ENCODE measurements at regions of chr1 and their contacts with region 1.

Region 1: GRCh38 chr1:112715264-112716053 is at the start of gene PPM1J:
- DNase-seq: peak; percentile 92 to 99 (median 96)
- H3K4me3 ChIP-seq: peak within 1 kb of the TSS; percentile 87
- H3K4me3 Mint-ChIP-seq: peak within 1 kb of the TSS; percentile 85 to 96 (median 92)
- H3K27ac ChIP-seq: peak within 1 kb of the TSS; percentile 54
- H3K27ac Mint-ChIP-seq: peak within 1 kb of the TSS; percentile 83 to 97 (median 92)
- H3K4me1 ChIP-seq: peaks cover 20% of the 10 kb centered on the region
- H3K4me1 Mint-ChIP-seq: peaks cover 18 to 27% (median 21%) of the 10 kb centered on the region in 3 donors
- H3K27me3 ChIP-seq: peaks cover 13% of the 10 kb centered on the region
- H3K27me3 Mint-ChIP-seq: peaks cover 6 to 14% of the 10 kb centered on the region in 2 donors
- total RNA-seq, gene PPM1J: 0.33 TPM in 1 of 2 experiments, not detected in the other

Region 2: DNA sequence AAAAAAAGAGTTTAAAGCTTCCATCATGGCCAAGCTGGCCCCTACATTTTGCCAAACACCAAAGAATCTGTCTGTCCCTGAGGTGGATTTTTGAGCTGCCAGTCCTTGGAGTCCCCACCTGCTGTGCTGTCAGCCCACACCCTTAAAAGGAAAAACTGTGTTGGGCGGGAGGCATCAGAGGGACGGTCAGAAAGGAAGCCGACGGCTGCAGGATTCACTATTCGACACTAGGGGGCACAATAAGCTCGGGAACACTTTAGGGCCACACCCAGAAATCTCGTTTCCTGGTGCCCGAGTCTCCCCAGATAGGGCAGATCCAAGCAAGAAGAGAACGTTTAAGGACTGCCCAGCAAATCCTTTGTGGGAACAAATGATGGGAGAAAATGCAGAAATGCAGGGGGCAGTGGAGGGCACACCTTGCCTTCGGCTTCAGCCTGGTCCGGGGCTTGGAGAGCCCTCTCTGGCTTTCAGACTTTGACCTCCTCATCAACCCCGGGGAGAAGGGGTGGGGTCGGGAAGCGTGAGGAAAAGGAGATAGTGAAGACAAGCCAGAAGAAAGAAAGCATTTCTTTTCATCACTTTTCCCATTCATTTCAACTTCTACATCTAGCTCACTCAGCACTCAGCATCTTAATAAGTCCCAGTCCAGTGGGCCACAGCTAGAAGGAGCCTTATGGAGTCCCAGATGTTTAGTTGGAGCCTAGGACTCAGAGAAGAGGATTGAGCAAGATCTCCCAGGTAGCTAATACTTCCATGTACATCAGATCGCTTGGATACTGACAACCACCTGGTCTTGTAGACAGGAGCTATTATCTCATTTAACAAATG is 324.5 kb before region 1 on chr1:
- CTCF ChIA-PET with region 1: interaction called, 13 read pairs
- POLR2A ChIA-PET with region 1: interaction called, 3 read pairs
- DNase-seq: peak; percentile 60 to 82 (median 71)
- H3K4me3 ChIP-seq: no peak overlapping the region
- H3K4me3 Mint-ChIP-seq: peak overlapping the region in 5 of 7 donors; percentile 15 to 49 (median 45)
- H3K27ac ChIP-seq: no peak overlapping the region
- H3K27ac Mint-ChIP-seq: no peak overlapping the region
- H3K4me1 ChIP-seq: peaks cover 13% of the 10 kb centered on the region
- H3K4me1 Mint-ChIP-seq: peaks cover 10 to 14% (median 14%) of the 10 kb centered on the region in 3 donors
- H3K27me3 ChIP-seq: no peaks in the 10 kb centered on the region
- H3K27me3 Mint-ChIP-seq: peaks cover 32 to 53% of the 10 kb centered on the region in 2 donors

Region 3: DNA sequence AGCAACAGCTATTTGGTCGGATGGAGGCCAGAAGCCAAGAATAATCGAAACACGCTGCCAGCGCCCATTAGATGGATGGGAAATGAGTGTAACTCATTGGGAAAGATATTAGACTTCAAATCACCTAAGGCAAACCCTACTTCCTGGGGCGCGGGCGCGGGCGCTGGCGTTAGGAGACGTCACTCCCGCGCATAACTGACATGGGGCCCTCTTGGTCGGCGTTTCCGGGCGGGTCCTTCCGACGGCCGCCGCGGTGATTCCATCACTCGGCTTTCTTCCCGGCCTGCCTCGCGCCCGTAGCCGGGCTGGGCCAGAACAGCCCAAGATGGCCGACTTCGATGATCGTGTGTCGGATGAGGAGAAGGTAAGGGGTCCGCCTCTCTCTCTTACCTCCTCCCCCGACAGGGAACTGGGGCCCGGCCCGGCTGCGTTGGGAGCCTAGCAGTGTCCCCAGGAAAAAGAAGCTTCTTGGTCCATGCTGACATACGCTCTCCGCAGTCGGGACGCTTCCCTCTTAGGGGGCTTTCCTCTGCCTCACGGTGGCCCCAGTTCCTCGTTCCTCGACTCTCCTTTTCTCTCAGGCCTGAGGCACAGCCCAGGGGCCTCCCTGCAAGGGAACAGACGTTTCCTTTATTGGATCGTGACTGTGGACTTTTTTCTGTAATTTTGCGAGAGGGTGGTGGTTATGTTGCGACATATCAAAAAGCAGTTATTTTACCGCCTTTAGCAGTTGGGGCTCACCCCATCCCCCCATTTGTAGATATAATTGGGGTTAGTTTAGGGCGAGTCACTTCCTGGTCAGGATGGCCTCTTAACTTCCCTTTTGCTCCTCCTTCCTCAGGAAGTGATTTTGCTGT is 95.7 kb before region 1 on chr1 and contains the start of gene CAPZA1:
- CTCF ChIA-PET with region 1: interaction called, 8 read pairs
- POLR2A ChIA-PET with region 1: interaction called, 21 read pairs
- DNase-seq: peak; percentile 85 to 95 (median 92)
- H3K4me3 ChIP-seq: peak within 1 kb of the TSS; percentile 100
- H3K4me3 Mint-ChIP-seq: peak within 1 kb of the TSS; percentile 96 to 100 (median 99)
- H3K27ac ChIP-seq: peak within 1 kb of the TSS; percentile 99
- H3K27ac Mint-ChIP-seq: peak within 1 kb of the TSS; percentile 97 to 100 (median 100)
- H3K4me1 ChIP-seq: peaks cover 44% of the 10 kb centered on the region
- H3K4me1 Mint-ChIP-seq: peaks cover 41 to 59% (median 54%) of the 10 kb centered on the region in 3 donors
- H3K27me3 ChIP-seq: no peaks in the 10 kb centered on the region
- H3K27me3 Mint-ChIP-seq: peaks cover 0 to 8% of the 10 kb centered on the region in 2 donors
- total RNA-seq, gene CAPZA1: 255 to 266 TPM

Region 4: DNA sequence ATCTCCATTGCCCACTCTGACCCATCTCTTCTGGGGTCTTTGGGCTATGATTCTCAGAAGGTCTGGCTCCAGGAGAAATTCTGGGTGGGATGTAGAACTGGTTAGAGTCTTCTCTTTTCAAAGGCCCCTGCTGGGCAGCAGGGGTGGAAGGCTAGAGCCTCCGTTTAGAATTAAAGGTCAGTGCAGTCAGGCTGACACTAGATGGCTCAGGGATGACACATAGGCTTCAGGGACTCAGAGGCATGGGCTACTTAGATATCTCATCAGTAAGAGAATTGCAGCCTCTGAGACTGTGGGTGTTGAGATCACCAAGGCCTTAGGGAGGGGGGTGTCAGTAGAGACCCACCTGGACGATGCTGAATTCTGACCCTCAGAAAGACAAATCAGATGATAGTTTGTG is 12.3 kb after region 1 on chr1:
- CTCF ChIA-PET with region 1: interaction called, 13 read pairs
- POLR2A ChIA-PET with region 1: interaction called, 5 read pairs
- DNase-seq: no peak
- H3K4me3 ChIP-seq: no peak overlapping the region
- H3K4me3 Mint-ChIP-seq: no peak overlapping the region
- H3K27ac ChIP-seq: no peak overlapping the region
- H3K27ac Mint-ChIP-seq: no peak overlapping the region
- H3K4me1 ChIP-seq: no peaks in the 10 kb centered on the region
- H3K4me1 Mint-ChIP-seq: peaks cover 5 to 8% (median 7%) of the 10 kb centered on the region in 3 donors
- H3K27me3 ChIP-seq: no peaks in the 10 kb centered on the region
- H3K27me3 Mint-ChIP-seq: peaks cover 4 to 6% of the 10 kb centered on the region in 2 donors

Region 5: DNA sequence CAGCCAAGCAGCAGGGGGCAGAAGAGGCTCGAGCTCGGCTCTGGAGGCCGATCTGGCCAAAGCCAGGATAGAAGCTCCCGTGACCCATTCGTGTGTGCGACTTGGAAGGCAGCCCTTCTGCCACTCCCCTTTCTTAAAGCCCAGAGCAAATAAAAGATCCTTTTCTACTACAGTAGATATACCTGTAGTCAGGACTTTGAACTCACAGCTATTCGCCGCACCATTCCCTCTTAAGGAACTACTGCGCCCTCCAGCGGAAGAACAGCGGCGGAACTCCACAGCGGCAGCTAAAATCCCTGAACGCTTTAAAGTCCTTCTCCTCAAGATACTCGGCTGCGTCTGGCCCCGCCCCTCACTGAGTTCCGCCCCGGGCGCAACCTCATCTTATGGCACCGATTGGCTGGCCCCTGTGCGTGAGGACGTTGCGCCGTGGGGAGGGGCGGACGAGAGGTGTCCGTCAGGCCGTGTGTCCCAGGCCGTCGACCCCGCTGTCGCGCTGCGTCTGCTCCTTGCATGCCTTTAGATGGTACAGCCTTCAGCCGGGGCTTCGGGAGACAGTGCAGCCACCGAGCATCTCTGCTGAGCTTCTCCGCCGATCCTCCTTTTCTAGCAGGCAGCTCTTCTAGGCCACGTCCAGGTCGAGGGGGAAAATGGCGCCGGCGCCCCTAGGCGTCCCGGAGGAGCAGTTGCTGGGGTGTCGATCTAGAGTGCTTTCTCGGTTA is 357.5 kb after region 1 on chr1 and contains the start of gene LRIG2:
- CTCF ChIA-PET with region 1: interaction called, 33 read pairs
- POLR2A ChIA-PET with region 1: interaction called, 13 read pairs
- DNase-seq: peak; percentile 95 to 97 (median 96)
- H3K4me3 ChIP-seq: peak within 1 kb of the TSS; percentile 79
- H3K4me3 Mint-ChIP-seq: peak within 1 kb of the TSS; percentile 96 to 99 (median 99)
- H3K27ac ChIP-seq: peak within 1 kb of the TSS; percentile 93
- H3K27ac Mint-ChIP-seq: peak within 1 kb of the TSS; percentile 86 to 100 (median 96)
- H3K4me1 ChIP-seq: peaks cover 27% of the 10 kb centered on the region
- H3K4me1 Mint-ChIP-seq: peaks cover 31 to 45% (median 36%) of the 10 kb centered on the region in 3 donors
- H3K27me3 ChIP-seq: no peaks in the 10 kb centered on the region
- H3K27me3 Mint-ChIP-seq: no peaks in the 10 kb centered on the region
- total RNA-seq, gene LRIG2: 8.1 to 8.2 TPM